Activated CD4-positive, alpha-beta T cell treated with anti-CD3 and anti-CD28 coated beads, Interleukin-2, amount 10 ng/mL, durations not matched to agents 24 days and 14 days (primary cell): ENCODE measurements at regions of chr6 and their contacts with region 1.

Region 1: GRCh38 chr6:31356946-31357466 is at the start of gene HLA-B:
- DNase-seq: peak; percentile 91
- H3K4me3 Mint-ChIP-seq: peak within 1 kb of the TSS; percentile 95
- H3K27ac Mint-ChIP-seq: peak within 1 kb of the TSS; percentile 99
- H3K4me1 Mint-ChIP-seq: peaks cover 52% of the 10 kb centered on the region
- H3K27me3 Mint-ChIP-seq: peaks cover 8% of the 10 kb centered on the region
- total RNA-seq, gene HLA-B: 3,406 and 3,483 TPM in 2 replicates

Region 2: DNA sequence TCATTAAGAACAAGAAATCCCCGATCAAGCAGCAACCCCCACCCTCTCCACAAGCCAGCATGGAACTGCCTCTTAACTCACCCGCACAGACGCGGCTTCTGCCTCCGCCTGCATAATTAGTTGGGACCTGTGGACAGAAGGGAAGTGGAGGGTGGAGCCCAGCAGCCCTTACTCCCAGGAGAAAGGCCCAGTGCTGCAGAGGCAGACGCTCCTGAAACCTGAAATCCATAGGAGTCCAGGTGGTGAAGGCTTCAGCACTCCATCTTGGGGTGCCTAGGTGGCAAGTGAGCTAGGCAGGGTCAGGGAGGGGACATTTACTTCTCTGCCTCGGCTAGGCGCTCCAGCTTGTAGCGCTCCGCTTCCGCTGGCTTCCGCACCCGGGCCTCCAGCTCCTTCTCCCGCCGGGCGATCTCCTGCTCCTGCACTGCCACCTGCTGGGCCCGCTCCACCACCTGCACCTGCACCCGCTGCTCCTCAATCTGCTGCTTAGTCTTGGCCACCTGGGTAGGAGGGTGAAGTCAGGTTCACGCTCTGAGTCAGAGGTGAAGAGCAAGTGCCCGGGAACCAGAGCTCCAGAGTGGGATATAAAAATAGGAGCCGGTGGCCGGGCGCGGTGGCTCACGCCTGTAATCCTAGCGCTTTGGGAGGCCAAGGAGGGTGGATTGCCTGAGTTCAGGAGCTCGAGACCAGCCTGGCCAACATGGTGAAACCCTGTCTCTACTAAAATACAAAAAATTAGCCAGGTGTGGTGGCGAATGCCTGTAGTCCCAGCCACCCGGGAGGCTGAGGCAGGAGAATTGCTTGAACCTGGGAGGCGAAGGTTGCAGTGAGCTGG is 626.2 kb before region 1 on chr6:
- intact Hi-C with region 1: loop called (anchors 10 kb)
- DNase-seq: peak; percentile 95
- H3K4me3 Mint-ChIP-seq: peak overlapping the region; percentile 75
- H3K27ac Mint-ChIP-seq: peak overlapping the region; percentile 87
- H3K4me1 Mint-ChIP-seq: peaks cover 49% of the 10 kb centered on the region
- H3K27me3 Mint-ChIP-seq: no peaks in the 10 kb centered on the region

Region 3: DNA sequence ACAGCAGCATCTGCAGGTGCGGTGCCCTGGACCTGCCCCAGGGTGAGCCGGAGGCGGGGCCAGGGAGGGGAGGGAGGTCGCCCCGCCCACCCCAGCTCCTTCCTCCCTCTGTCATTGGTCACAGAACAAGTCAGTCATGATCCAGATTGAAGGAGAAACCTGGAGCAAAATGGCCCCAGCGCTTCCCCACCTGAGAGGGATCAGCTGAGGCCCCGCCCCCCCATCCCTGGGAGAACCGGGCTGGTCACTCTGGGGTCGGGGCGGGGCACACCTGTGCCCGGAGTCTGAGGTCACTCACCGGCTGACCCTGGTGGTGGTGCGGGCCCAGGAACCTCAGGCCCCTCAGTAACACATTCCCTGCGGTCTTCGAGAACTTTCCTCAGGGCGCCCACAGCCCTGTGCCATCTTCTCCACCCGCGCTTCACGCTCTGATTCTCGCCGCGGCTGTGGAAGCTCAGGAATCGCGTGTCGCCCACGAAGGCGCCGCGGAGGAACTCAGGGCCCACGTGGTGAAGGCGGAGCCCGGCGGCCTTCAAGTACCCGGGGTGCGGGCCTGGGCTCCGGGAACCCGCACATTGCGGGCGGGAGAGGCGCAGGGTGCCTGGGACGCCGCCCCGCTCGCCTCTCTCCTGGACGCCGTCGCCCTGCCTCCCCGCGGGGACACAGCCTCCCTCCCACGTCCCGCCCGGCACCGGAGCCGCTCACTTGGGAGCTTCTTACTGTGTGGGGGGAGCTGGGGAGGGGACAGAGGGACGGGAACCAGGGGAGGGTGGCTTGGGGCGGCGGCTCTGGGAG is 48.8 kb before region 1 on chr6:
- intact Hi-C with region 1: no loop called
- DNase-seq: peak; percentile 77
- H3K4me3 Mint-ChIP-seq: peak overlapping the region; percentile 81
- H3K27ac Mint-ChIP-seq: no peak overlapping the region
- H3K4me1 Mint-ChIP-seq: peaks cover 5% of the 10 kb centered on the region
- H3K27me3 Mint-ChIP-seq: peaks cover 43% of the 10 kb centered on the region